Activated T-helper 2 cell treated with anti-CD3 and anti-CD28 coated beads, Interferon-gamma antibody, Interleukin-2, Interleukin-4, amounts not matched to agents 10 μg/mL and 5 μg/mL and 100 μg/mL, durations not matched to agents 14 hours and 24 hours and 36 hours (primary cell): ENCODE measurements at regions of chr18 and their contacts with region 1.

Region 1: GRCh38 chr18:31819106-31819924 is 58.6 kb upstream of the SLC25A52 start:
- DNase-seq: no peak
- H3K4me3 Mint-ChIP-seq: no peak overlapping the region
- H3K27ac Mint-ChIP-seq: no peak overlapping the region
- H3K4me1 Mint-ChIP-seq: no peaks in the 10 kb centered on the region
- H3K27me3 Mint-ChIP-seq: peaks cover 8% of the 10 kb centered on the region

Region 2: GRCh38 chr18:31399306-31400032 is 419.8 kb before region 1 on chr18:
- intact Hi-C with region 1: no loop called
- DNase-seq: no peak
- H3K4me3 Mint-ChIP-seq: no peak overlapping the region
- H3K27ac Mint-ChIP-seq: no peak overlapping the region
- H3K4me1 Mint-ChIP-seq: no peaks in the 10 kb centered on the region
- H3K27me3 Mint-ChIP-seq: no peaks in the 10 kb centered on the region

Region 3: GRCh38 chr18:31741097-31741735 is 78.1 kb before region 1 on chr18:
- intact Hi-C with region 1: loop called (anchors 1 kb)
- DNase-seq: no peak
- H3K4me3 Mint-ChIP-seq: no peak overlapping the region
- H3K27ac Mint-ChIP-seq: no peak overlapping the region
- H3K4me1 Mint-ChIP-seq: no peaks in the 10 kb centered on the region
- H3K27me3 Mint-ChIP-seq: no peaks in the 10 kb centered on the region